Activated CD4-positive, alpha-beta T cell treated with anti-CD3 and anti-CD28 coated beads for 36 hours (primary cell): ENCODE measurements at regions of chr1 and their contacts with region 1.

Region 1: GRCh38 chr1:15152318-15153183 is 996 bp upstream of the TMEM51 start:
- DNase-seq: peak; percentile 58
- ATAC-seq: peak; percentile 45
- H3K4me3 Mint-ChIP-seq: peak overlapping the region; percentile 8
- H3K27ac Mint-ChIP-seq: no peak overlapping the region
- H3K4me1 Mint-ChIP-seq: peaks cover 19% of the 10 kb centered on the region
- H3K27me3 Mint-ChIP-seq: peaks cover 47% of the 10 kb centered on the region

Region 2: GRCh38 chr1:15272009-15272788 is 119.6 kb after region 1 on chr1:
- CTCF ChIA-PET with region 1: interaction called, 7 read pairs
- POLR2A ChIA-PET with region 1: no interaction called
- intact Hi-C with region 1: loop called (anchors 1 to 2 kb)
- DNase-seq: peak; percentile 71
- ATAC-seq: peak; percentile 95
- H3K4me3 Mint-ChIP-seq: no peak overlapping the region
- H3K27ac Mint-ChIP-seq: no peak overlapping the region
- H3K4me1 Mint-ChIP-seq: peaks cover 5% of the 10 kb centered on the region
- H3K27me3 Mint-ChIP-seq: peaks cover 32% of the 10 kb centered on the region